Endothelial cell of umbilical vein (primary cell): ENCODE measurements at regions of chr11 and their contacts with region 1.

Region 1: GRCh38 chr11:85795712-85796487 is 15.0 kb downstream of the SYTL2 start:
- DNase-seq: no peak
- H3K4me3 ChIP-seq: no peak overlapping the region
- H3K27ac ChIP-seq: no peak overlapping the region
- H3K4me1 ChIP-seq: no peaks in the 10 kb centered on the region
- H3K27me3 ChIP-seq: peaks cover 4 to 14% of the 10 kb centered on the region in 2 experiments
- CTCF ChIP-seq: no peak
- POLR2A ChIP-seq: no peak

Region 2: GRCh38 chr11:85759915-85760314 is 36.0 kb before region 1 on chr11:
- CTCF ChIA-PET with region 1: no interaction called
- POLR2A ChIA-PET with region 1: no interaction called
- dilution Hi-C with region 1: no loop called
- intact Hi-C with region 1: loop called (anchors 5 kb)
- DNase-seq: no peak
- H3K4me3 ChIP-seq: no peak overlapping the region
- H3K27ac ChIP-seq: no peak overlapping the region
- H3K4me1 ChIP-seq: no peaks in the 10 kb centered on the region
- H3K27me3 ChIP-seq: peaks cover 3 to 6% of the 10 kb centered on the region in 2 experiments
- CTCF ChIP-seq: no peak
- POLR2A ChIP-seq: no peak

Region 3: DNA sequence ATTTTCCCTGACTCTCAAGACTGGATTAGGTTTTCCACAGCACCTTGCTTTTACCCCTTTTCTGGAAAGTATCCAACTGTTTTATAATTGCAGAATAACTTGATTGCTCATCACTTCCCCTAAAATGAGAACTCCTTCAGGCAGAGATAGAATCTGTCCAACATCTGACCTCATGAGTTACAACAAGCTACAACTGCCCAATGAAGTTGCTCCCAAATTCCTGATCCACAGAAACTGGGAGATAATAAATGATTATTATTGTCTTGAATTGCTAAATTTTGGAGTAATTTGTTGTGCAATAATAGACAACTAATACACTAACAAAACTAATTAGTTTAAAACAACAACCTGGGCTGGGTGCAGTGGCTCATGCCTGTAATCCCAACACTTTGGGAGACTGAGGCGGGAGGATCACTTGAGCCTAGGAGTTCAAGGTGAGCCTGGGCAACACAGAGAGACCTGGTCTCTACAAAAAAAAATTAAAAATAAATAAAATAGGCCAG is 49.3 kb after region 1 on chr11:
- CTCF ChIA-PET with region 1: no interaction called
- POLR2A ChIA-PET with region 1: no interaction called
- dilution Hi-C with region 1: no loop called
- intact Hi-C with region 1: no loop called
- DNase-seq: no peak
- H3K4me3 ChIP-seq: no peak overlapping the region
- H3K27ac ChIP-seq: no peak overlapping the region
- H3K4me1 ChIP-seq: peaks cover 3% of the 10 kb centered on the region
- H3K27me3 ChIP-seq: no peaks in the 10 kb centered on the region
- CTCF ChIP-seq: no peak
- POLR2A ChIP-seq: no peak